Tibial artery (tissue), 4 donors: ENCODE measurements at regions of chr6 and their contacts with region 1.

Region 1: DNA sequence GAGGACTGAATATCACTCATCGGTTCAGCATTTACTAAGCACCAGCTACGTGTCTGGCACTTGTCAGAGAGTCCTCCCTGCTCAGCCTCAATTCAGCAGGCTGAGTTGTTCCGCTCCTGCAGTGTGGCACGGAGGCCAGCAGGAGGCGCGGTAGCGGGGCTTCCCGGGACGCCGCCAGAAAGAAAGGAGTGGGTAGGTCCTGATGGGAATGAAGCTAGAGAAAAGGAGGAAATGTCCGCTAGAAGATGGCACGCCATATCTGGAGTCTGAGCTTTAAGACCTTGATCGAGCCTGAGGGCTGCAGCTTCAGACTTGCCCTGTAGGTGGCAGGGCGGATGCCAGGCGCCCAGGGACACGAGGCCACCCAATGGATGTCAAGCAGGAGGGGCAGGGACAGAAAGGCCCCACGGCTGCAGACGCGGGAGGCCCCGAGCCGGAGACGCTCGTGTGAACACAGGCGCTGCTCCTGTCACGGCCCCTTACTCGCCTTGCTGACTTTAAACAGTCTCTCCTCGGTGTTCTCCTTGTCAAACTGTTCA is 18.7 kb downstream of the SERPINB6 start:
- DNase-seq: peak; percentile 70 to 93
- H3K4me3 ChIP-seq: peak overlapping the region; percentile 1 to 4
- H3K27ac ChIP-seq: peak overlapping the region; percentile 72 to 75
- H3K4me1 ChIP-seq: peaks cover 0 to 27% (median 16%) of the 10 kb centered on the region in 4 donors
- H3K27me3 ChIP-seq: no peaks in the 10 kb centered on the region
- CTCF ChIP-seq: peak; percentile 98 to 100

Region 2: GRCh38 chr6:2988426-2989331 is 36.1 kb after region 1 on chr6:
- intact Hi-C with region 1: loop called (anchors 2 kb)
- DNase-seq: peak; percentile 95 to 98
- H3K4me3 ChIP-seq: peak overlapping the region; percentile 82 to 92
- H3K27ac ChIP-seq: peak overlapping the region; percentile 95 to 97
- H3K4me1 ChIP-seq: peaks cover 0 to 26% (median 18%) of the 10 kb centered on the region in 4 donors
- H3K27me3 ChIP-seq: no peaks in the 10 kb centered on the region
- CTCF ChIP-seq: peak; percentile 93 to 94